ENCODE measurements at regions of chr9 and their contacts with region 1.

Region 1: GRCh38 chr9:91164724-91165520 is 196.8 kb downstream of the AUH start:
- DNase-seq: peak; percentile 96
- ATAC-seq: peak; percentile 69
- H3K4me3 Mint-ChIP-seq: peak overlapping the region; percentile 81
- H3K27ac Mint-ChIP-seq: peak overlapping the region; percentile 95
- H3K4me1 Mint-ChIP-seq: peaks cover 66% of the 10 kb centered on the region
- H3K27me3 Mint-ChIP-seq: no peaks in the 10 kb centered on the region

Region 2: GRCh38 chr9:91063471-91063870 is 101.5 kb before region 1 on chr9:
- CTCF ChIA-PET with region 1: no interaction called
- DNase-seq: peak; percentile 27
- ATAC-seq: no peak
- H3K4me3 Mint-ChIP-seq: no peak overlapping the region
- H3K27ac Mint-ChIP-seq: no peak overlapping the region
- H3K4me1 Mint-ChIP-seq: peaks cover 16% of the 10 kb centered on the region
- H3K27me3 Mint-ChIP-seq: no peaks in the 10 kb centered on the region

Region 3: DNA sequence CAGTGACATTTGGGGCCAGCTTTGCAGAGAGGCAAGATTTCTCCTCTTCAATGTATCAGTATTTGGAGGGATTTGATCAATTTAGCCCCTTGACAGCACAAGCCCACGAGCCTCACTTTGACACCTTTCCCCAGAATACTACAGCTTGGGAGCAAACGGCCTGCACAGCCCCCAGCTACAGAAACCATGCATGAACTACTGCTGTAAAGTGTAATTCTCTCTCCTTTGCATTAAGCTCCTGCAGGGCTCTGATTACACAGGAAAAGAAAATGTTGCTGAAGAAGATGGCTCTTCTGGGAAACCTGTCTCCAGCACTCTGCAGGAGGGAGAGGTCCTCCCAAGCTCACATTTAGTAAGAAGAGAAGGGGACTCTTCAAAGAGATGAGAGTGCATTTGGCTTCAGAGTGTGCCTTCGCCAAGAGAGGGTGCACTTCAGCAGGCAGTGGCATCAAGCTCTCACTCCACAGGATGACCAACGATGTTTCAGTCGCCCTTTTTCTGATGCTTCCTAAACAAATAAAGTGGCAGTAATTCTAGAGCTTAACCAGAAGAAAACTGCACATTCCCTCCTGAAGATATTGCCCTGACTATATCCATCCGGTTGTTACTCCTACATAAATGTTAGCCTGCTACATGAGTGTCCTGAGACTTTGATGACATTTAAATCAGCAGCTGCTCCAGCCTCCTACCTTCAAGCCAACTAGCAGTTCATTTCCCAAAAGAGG is 75.4 kb before region 1 on chr9:
- CTCF ChIA-PET with region 1: interaction called, 18 read pairs
- DNase-seq: peak; percentile 56
- ATAC-seq: peak; percentile 76
- H3K4me3 Mint-ChIP-seq: no peak overlapping the region
- H3K27ac Mint-ChIP-seq: peak overlapping the region; percentile 70
- H3K4me1 Mint-ChIP-seq: peaks cover 64% of the 10 kb centered on the region
- H3K27me3 Mint-ChIP-seq: no peaks in the 10 kb centered on the region

Region 4: GRCh38 chr9:91101611-91102168 is 63.2 kb before region 1 on chr9:
- CTCF ChIA-PET with region 1: interaction called, 25 read pairs
- DNase-seq: peak; percentile 97
- ATAC-seq: peak; percentile 91
- H3K4me3 Mint-ChIP-seq: peak overlapping the region; percentile 64
- H3K27ac Mint-ChIP-seq: peak overlapping the region; percentile 90
- H3K4me1 Mint-ChIP-seq: peaks cover 73% of the 10 kb centered on the region
- H3K27me3 Mint-ChIP-seq: no peaks in the 10 kb centered on the region

Region 5: DNA sequence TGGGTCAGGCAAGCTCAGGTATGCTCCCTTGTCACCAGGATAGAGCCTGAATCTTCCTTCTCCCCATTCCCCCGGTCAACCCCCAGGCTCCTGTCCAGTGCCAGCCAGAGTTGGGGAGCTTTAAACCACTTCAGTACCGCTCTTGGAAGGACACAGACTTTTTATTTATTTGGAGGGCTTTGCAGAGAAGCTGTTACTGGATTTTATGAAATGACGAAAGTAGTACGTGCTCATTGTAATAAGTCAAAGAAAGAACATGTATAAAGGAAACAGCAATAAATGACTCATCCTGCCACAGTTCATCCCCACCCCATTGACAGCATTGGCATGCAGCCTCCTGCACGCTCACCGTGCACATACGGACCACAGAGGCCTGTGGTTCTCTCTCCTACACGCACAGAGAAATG is 33.5 kb before region 1 on chr9:
- CTCF ChIA-PET with region 1: interaction called, 17 read pairs
- DNase-seq: peak; percentile 96
- ATAC-seq: peak; percentile 98
- H3K4me3 Mint-ChIP-seq: peak overlapping the region; percentile 50
- H3K27ac Mint-ChIP-seq: peak overlapping the region; percentile 94
- H3K4me1 Mint-ChIP-seq: peaks cover 62% of the 10 kb centered on the region
- H3K27me3 Mint-ChIP-seq: no peaks in the 10 kb centered on the region

Region 6: GRCh38 chr9:91150998-91151717 is 13.8 kb before region 1 on chr9:
- CTCF ChIA-PET with region 1: interaction called, 55 read pairs
- DNase-seq: peak; percentile 82
- ATAC-seq: peak; percentile 80
- H3K4me3 Mint-ChIP-seq: peak overlapping the region; percentile 51
- H3K27ac Mint-ChIP-seq: peak overlapping the region; percentile 94
- H3K4me1 Mint-ChIP-seq: peaks cover 95% of the 10 kb centered on the region
- H3K27me3 Mint-ChIP-seq: peaks cover 2% of the 10 kb centered on the region

Region 7: GRCh38 chr9:91177661-91178280 is 12.8 kb after region 1 on chr9:
- CTCF ChIA-PET with region 1: interaction called, 52 read pairs
- DNase-seq: peak; percentile 77
- ATAC-seq: peak; percentile 67
- H3K4me3 Mint-ChIP-seq: peak overlapping the region; percentile 23
- H3K27ac Mint-ChIP-seq: peak overlapping the region; percentile 91
- H3K4me1 Mint-ChIP-seq: peaks cover 63% of the 10 kb centered on the region
- H3K27me3 Mint-ChIP-seq: no peaks in the 10 kb centered on the region

Region 8: GRCh38 chr9:91253488-91253887 is 88.6 kb after region 1 on chr9:
- CTCF ChIA-PET with region 1: interaction called, 18 read pairs
- DNase-seq: peak; percentile 77
- ATAC-seq: peak; percentile 96
- H3K4me3 Mint-ChIP-seq: no peak overlapping the region
- H3K27ac Mint-ChIP-seq: no peak overlapping the region
- H3K4me1 Mint-ChIP-seq: peaks cover 47% of the 10 kb centered on the region
- H3K27me3 Mint-ChIP-seq: no peaks in the 10 kb centered on the region

Region 9: GRCh38 chr9:91273853-91274552 is 109.1 kb after region 1 on chr9:
- CTCF ChIA-PET with region 1: no interaction called
- DNase-seq: no peak
- ATAC-seq: peak; percentile 80
- H3K4me3 Mint-ChIP-seq: no peak overlapping the region
- H3K27ac Mint-ChIP-seq: no peak overlapping the region
- H3K4me1 Mint-ChIP-seq: peaks cover 16% of the 10 kb centered on the region
- H3K27me3 Mint-ChIP-seq: no peaks in the 10 kb centered on the region

Measured in activated CD8-positive, alpha-beta memory T cell treated with anti-CD3 and anti-CD28 coated beads, Interleukin-2, amount 10 ng/mL, durations not matched to agents 7 days and 5 days (primary cell).